ENCODE measurements at regions of chr1 and their contacts with region 1.

Region 1: GRCh38 chr1:74689621-74690363 is 16.2 kb upstream of the ERICH3 start:
- DNase-seq: peak; percentile 53
- ATAC-seq: no peak
- H3K4me3 Mint-ChIP-seq: no peak overlapping the region
- H3K27ac Mint-ChIP-seq: no peak overlapping the region
- H3K4me1 Mint-ChIP-seq: no peaks in the 10 kb centered on the region
- H3K27me3 Mint-ChIP-seq: no peaks in the 10 kb centered on the region

Region 2: GRCh38 chr1:73839922-73840321 is 849.9 kb before region 1 on chr1:
- CTCF ChIA-PET with region 1: no interaction called
- POLR2A ChIA-PET with region 1: no interaction called
- intact Hi-C with region 1: loop called in 1 of 2 experiments (anchors 5 kb)
- DNase-seq: peak; percentile 19
- ATAC-seq: no peak
- H3K4me3 Mint-ChIP-seq: no peak overlapping the region
- H3K27ac Mint-ChIP-seq: no peak overlapping the region
- H3K4me1 Mint-ChIP-seq: no peaks in the 10 kb centered on the region
- H3K27me3 Mint-ChIP-seq: no peaks in the 10 kb centered on the region

Region 3: GRCh38 chr1:73998348-73998959 is 691.3 kb before region 1 on chr1:
- CTCF ChIA-PET with region 1: no interaction called
- POLR2A ChIA-PET with region 1: no interaction called
- intact Hi-C with region 1: loop called in 1 of 2 experiments (anchors 5 kb)
- DNase-seq: no peak
- ATAC-seq: no peak
- H3K4me3 Mint-ChIP-seq: no peak overlapping the region
- H3K27ac Mint-ChIP-seq: no peak overlapping the region
- H3K4me1 Mint-ChIP-seq: no peaks in the 10 kb centered on the region
- H3K27me3 Mint-ChIP-seq: no peaks in the 10 kb centered on the region

Region 4: GRCh38 chr1:74504125-74504932 is 185.5 kb before region 1 on chr1:
- CTCF ChIA-PET with region 1: interaction called, 4 read pairs
- POLR2A ChIA-PET with region 1: no interaction called
- intact Hi-C with region 1: loop called in 1 of 2 experiments (anchors 10 kb)
- DNase-seq: peak; percentile 68
- ATAC-seq: peak; percentile 81
- H3K4me3 Mint-ChIP-seq: no peak overlapping the region
- H3K27ac Mint-ChIP-seq: no peak overlapping the region
- H3K4me1 Mint-ChIP-seq: no peaks in the 10 kb centered on the region
- H3K27me3 Mint-ChIP-seq: peaks cover 5% of the 10 kb centered on the region

Region 5: DNA sequence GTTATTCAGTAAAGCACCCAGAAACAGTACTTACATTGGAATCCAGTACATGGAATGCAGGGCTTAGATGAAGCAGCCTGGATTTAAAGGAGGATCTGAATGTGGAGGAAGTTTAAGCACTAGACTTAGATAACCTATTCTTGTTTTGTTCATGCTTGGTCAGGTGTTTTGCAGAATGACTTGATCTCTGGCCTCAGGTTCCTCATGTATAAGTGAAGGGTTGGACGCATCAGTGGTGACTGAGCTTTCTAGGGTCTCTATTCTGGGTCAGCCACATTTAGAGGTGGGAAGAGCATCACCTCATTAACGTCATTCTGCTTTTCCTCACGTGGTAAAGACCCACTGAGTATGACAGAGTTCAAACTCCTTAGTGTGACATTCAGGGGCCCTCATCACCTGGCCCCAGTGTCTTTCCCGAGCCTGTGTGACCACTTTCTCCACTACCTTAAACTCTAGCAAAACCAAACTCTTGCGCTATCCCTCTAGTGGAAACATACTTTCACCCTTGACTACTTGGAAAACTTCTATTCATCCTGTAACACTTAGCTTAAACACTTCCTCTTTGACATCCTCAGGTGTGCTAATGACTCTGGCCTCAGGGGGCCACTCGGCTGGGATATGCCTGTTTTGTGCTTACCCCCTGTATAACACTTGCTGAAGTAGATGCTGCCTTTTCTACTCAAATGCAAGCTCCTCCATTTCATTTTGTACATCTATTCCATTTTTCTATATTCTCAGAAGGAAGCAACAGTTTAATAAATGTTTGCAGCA is 15.3 kb before region 1 on chr1:
- CTCF ChIA-PET with region 1: interaction called, 13 read pairs
- POLR2A ChIA-PET with region 1: no interaction called
- intact Hi-C with region 1: no loop called
- DNase-seq: no peak
- ATAC-seq: no peak
- H3K4me3 Mint-ChIP-seq: no peak overlapping the region
- H3K27ac Mint-ChIP-seq: no peak overlapping the region
- H3K4me1 Mint-ChIP-seq: peaks cover 4% of the 10 kb centered on the region
- H3K27me3 Mint-ChIP-seq: peaks cover 42% of the 10 kb centered on the region